Activated T-helper 1 cell treated with anti-CD3 and anti-CD28 coated beads, Interleukin-12 subunit alpha, Interleukin-12 subunit beta, Interleukin-2, Interleukin-4 antibody, amounts not matched to agents 30 ng/mL and 10 ng/mL and 1 ng/mL, durations not matched to agents 14 hours and 24 hours and 36 hours (primary cell): ENCODE measurements at regions of chr10 and their contacts with region 1.

Region 1: GRCh38 chr10:45249978-45250693 is 65.3 kb downstream of the OR13A1 start:
- DNase-seq: no peak
- H3K4me3 Mint-ChIP-seq: peak overlapping the region; percentile 24
- H3K27ac Mint-ChIP-seq: no peak overlapping the region
- H3K4me1 Mint-ChIP-seq: peaks cover 33% of the 10 kb centered on the region
- H3K27me3 Mint-ChIP-seq: peaks cover 18% of the 10 kb centered on the region

Region 2: DNA sequence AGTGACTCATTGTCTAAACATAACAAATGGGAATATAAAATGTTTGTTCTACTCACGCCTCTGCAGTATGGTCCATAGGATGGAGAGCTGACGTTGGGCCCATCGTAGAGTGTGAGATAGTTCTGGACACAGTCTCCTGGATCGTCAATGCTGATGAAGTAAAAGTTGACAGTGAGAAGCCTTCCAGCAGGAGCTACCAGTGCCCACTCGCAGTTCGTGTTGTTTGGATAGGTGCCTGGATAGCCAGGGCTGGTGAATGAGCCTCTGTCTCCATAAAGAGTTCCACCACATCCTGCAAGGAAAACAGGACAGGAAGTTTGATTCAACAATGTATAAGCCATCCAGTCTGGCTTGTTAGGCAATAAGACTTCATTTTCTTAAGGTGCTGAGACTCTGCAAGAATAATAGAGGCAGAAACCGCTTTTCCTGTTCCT is 14.3 kb before region 1 on chr10:
- intact Hi-C with region 1: loop called (anchors 1 kb)
- DNase-seq: no peak
- H3K4me3 Mint-ChIP-seq: no peak overlapping the region
- H3K27ac Mint-ChIP-seq: no peak overlapping the region
- H3K4me1 Mint-ChIP-seq: peaks cover 14% of the 10 kb centered on the region
- H3K27me3 Mint-ChIP-seq: peaks cover 2% of the 10 kb centered on the region

Region 3: DNA sequence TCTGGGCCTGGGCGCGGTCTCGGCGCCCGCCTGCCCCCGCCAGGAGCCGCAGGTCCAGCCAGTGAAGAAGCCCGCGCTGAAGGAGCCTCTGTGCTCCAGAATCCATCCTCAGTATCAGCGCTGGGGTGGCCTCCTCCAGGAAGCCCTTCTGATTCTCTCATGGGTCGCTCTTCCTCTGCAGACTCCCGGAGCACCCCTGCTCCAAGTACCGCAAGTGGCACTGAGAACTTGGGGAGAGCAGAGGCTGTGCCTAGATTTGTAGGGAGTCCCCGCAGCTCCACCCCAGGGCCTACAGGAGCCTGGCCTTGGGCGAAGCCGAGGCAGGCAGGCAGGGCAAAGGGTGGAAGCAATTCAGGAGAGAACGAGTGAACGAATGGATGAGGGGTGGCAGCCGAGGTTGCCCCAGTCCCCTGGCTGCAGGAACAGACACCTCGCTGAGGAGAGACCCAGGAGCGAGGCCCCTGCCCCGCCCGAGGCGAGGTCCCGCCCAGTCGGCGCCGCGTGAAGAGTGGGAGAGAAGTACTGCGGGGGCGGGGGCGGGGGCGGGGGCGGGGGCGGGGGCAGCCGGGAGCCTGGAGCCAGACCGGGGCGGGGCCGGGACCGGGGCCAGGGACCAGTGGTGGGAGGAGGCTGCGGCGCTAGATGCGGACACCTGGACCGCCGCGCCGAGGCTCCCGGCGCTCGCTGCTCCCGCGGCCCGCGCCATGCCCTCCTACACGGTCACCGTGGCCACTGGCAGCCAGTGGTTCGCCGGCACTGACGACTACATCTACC is 123.6 kb after region 1 on chr10 and contains the start of gene ALOX5:
- intact Hi-C with region 1: loop called (anchors 2 kb)
- DNase-seq: peak; percentile 48
- H3K4me3 Mint-ChIP-seq: peak within 1 kb of the TSS; percentile 87
- H3K27ac Mint-ChIP-seq: peak within 1 kb of the TSS; percentile 67
- H3K4me1 Mint-ChIP-seq: peaks cover 37% of the 10 kb centered on the region
- H3K27me3 Mint-ChIP-seq: peaks cover 59% of the 10 kb centered on the region
- total RNA-seq, gene ALOX5: 2.9 and 3.1 TPM in 2 replicates

Region 4: DNA sequence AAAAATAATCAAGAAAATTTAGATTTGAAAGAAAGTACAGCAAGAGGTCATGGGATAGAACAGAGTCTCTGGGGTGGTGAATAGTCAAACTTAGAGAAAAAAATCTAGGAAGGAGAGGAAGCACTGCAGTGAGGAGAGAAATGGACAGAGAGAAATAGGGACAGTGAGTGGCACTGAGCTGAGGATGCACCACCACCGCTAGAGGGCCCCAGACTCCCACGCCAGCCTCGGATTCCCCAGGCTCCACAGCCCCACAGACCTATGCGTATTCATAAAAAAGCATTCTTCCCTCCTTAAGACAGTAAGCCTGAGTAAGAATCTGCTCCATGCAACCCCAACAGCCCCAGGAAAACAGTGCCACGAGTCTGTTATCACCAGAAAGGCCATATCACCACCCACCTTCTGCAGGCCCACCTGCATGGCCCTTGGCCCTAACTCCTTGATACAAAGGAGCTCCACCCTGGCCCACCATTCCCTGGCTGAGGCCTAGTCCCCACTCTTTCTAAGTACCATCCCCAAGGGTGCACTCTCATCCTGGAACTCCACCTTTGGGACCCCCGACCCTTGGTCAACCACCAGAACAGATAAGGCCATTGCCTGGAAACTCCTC is 214.9 kb after region 1 on chr10:
- intact Hi-C with region 1: loop called (anchors 1 kb)
- DNase-seq: peak; percentile 63
- H3K4me3 Mint-ChIP-seq: no peak overlapping the region
- H3K27ac Mint-ChIP-seq: no peak overlapping the region
- H3K4me1 Mint-ChIP-seq: peaks cover 55% of the 10 kb centered on the region
- H3K27me3 Mint-ChIP-seq: no peaks in the 10 kb centered on the region

Region 5: DNA sequence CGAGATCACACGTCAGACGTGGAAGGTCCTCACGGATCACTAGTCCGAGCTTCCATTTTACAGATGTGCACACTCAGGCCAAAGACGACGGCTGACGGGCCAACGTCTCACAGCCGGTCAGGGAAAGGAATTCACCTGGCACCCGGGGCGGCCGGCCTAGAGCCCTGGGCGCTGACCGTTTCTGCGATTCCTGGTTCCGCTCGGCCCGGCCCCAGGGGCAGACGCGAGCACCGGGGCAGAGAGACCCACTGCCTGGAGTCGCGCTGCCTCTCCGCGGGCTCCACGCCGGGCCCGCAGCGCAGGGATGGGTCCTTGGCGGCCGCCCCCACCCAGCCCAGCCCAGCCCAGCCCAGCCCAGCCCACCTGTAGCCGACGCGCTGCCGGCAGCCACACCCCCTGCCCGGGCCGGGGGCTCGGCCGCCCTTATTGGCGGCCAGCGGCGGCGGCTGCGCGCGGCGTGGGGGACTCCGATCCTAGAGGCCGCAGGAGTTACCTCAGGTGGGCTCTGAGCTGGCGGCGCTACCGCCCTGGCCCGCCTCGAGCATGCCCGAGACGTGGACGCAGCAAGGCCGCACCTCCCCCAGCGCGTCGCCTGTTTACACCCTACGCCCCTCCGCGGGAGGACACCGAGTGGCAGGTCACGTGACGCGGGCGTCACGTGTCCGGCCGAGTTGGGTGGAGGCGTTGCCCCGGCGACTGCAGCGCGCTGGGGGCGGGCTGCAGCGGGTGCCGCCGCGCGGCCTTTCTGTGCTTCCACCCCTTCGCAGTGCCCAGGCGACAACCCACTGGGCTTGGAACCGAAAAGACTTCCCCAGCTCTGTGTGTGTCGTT is 344.4 kb after region 1 on chr10:
- intact Hi-C with region 1: loop called (anchors 2 kb)
- DNase-seq: peak; percentile 89
- H3K4me3 Mint-ChIP-seq: peak overlapping the region; percentile 90
- H3K27ac Mint-ChIP-seq: peak overlapping the region; percentile 81
- H3K4me1 Mint-ChIP-seq: peaks cover 40% of the 10 kb centered on the region
- H3K27me3 Mint-ChIP-seq: peaks cover 20% of the 10 kb centered on the region

Region 6: DNA sequence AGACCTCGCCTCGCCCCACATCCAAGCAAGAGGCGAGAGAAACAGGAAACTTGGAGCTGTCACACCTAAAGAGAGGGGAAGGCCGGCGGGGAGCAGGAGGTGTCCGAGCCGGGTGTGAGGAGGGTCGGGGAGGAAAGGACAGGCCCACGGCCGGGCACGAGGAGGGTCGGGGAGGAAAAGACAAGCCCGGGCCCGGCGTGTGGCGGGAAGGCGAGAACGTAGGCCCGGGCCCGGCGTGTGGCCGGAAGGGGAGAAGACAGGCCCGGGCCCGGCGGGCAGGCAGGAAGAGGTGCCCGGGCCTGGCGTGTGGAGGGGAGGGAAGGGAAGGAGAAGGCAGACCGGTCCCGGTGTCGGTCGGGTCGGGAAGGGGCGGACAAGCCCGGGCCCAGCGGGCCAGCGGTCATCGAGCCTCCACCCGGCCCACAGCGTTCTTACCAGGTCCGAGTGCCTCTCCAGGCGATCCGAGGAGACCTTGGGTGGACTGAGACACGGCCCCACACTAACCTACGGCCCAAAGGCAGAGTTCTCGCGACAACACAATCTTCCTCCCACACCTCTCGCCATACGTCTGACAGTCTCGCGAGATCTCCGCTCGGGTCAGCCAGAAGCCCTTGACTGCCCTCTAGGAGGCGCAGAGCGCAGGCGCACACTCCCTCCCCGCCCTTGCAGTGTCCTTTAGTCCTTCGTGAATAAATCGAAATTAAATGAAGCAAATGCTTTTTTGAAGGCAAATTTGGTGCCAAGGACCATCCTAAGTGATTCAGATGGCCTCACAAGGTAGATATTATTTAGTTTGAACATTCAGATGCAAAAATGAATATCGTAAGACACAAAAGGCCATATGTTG is 780.2 kb after region 1 on chr10 and contains the start of gene NCOA4:
- intact Hi-C with region 1: loop called (anchors 5 kb)
- DNase-seq: peak; percentile 93
- H3K4me3 Mint-ChIP-seq: peak within 1 kb of the TSS; percentile 95
- H3K27ac Mint-ChIP-seq: peak within 1 kb of the TSS; percentile 91
- H3K4me1 Mint-ChIP-seq: peaks cover 45% of the 10 kb centered on the region
- H3K27me3 Mint-ChIP-seq: no peaks in the 10 kb centered on the region
- total RNA-seq, gene NCOA4: 101 and 102 TPM in 2 replicates